CD8-positive, alpha-beta memory T cell (primary cell): ENCODE measurements at regions of chr6 and their contacts with region 1.

Region 1: DNA sequence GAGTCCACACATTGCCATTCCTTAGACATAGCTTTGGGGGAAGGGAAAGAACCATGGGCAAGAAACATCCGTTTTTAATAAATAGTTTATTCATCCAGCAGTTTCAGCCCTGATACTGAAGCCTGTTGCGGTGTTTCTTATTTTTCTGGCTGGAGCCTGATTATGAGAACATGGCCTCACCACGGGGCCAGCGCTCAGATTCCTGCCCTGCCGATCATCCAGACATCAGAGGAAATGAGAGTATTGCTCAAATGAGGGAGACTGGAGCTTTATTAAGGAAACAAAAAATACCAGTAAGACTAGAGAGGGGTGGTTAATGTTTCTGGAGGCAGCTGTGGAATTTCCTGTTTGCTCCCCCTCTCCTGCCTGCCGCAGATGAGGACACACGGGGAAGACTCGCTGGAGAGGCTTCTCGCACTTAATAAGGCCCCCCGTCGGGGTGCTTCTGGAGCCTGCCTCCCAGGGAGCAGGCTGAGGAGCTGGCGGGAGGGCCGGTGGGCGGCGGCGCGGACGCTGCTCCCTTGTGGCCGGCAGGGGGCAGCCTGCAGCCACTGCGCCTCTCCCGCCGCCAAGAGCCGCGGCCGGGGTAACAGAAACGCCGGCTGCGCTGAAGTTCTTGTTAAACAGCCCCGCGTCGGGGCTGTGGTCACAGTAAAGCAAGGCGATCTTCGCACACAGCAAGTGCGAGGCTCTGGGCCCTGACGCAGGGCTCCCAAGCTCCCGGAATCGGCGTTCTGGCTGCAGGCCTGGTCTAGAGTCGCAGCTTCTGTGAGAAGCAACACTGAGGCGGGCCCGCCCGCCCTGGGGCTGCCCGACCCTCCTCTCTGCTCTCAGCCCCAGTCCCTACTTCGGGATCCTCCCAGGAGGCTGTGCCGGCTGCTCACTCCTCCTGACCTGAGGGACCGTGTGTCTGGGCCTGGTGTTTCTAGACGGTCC is 17.5 kb downstream of the LEMD2 start:
- DNase-seq: peak; percentile 40 to 69 (median 54)
- H3K4me3 ChIP-seq: no peak overlapping the region
- H3K4me3 Mint-ChIP-seq: peak overlapping the region in 2 of 7 donors; percentile 15 to 44
- H3K27ac ChIP-seq: no peak overlapping the region
- H3K27ac Mint-ChIP-seq: peak overlapping the region in 2 of 8 donors; percentile 36 to 86
- H3K4me1 ChIP-seq: peaks cover 6% of the 10 kb centered on the region
- H3K4me1 Mint-ChIP-seq: peaks cover 13 to 23% (median 16%) of the 10 kb centered on the region in 3 donors
- H3K27me3 ChIP-seq: no peaks in the 10 kb centered on the region
- H3K27me3 Mint-ChIP-seq: peaks cover 4 to 15% of the 10 kb centered on the region in 2 donors

Region 2: GRCh38 chr6:33700391-33701050 is 70.9 kb before region 1 on chr6:
- CTCF ChIA-PET with region 1: no interaction called
- POLR2A ChIA-PET with region 1: no interaction called
- DNase-seq: peak; percentile 60 to 77 (median 61)
- H3K4me3 ChIP-seq: no peak overlapping the region
- H3K4me3 Mint-ChIP-seq: no peak overlapping the region
- H3K27ac ChIP-seq: no peak overlapping the region
- H3K27ac Mint-ChIP-seq: peak overlapping the region; percentile 8 to 94 (median 74)
- H3K4me1 ChIP-seq: peaks cover 33% of the 10 kb centered on the region
- H3K4me1 Mint-ChIP-seq: peaks cover 25 to 30% (median 29%) of the 10 kb centered on the region in 3 donors
- H3K27me3 ChIP-seq: no peaks in the 10 kb centered on the region
- H3K27me3 Mint-ChIP-seq: no peaks in the 10 kb centered on the region

Region 3: DNA sequence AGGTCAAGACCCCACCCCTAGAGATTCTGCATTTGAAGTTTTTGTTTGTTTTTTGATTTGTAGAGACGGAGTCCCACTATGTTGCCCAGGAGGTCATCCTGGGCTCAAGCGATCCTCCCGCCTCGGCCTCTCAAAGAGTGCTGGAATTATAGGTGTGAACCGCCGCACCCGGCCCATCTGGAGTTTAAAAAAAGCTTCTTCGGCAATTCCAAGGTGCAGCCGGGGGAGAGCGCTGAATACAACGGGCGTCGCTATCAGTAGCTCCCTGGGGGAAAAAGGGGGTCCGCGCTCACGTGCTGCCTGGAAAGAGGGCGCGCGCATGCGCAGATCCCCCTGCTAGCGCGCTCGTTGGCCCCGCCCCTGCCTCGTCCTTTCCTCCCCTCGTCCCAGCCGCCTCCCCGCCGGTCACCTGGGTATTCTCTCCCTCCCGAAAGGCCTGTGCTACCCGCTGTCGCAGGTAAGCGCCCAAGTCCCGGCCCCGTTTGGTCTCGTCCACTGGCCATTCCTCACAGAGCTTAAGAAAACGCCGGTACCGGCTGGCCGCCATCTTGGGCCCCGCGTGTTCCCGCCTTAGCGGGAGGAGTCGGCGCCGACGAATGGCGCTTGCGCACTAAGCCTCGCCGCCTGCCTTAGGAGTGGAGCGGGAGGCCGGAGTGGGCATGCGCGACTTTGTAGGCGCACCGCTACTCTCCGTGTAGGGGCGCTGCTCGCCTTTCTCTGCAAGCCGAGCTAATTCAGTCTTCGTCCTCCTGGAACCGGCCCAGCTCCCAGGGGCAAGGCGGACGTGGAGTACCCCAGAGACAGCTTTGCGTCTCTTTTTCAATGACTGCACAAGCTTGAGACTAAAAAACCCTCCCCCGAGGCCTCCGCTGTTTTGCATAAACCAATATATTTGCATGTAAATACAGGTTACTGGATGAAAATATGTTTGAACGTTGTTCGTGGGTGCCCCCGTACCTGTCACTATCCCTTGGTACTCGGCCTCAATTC is 60.0 kb before region 1 on chr6 and contains the start of gene UQCC2:
- CTCF ChIA-PET with region 1: interaction called, 15 read pairs
- POLR2A ChIA-PET with region 1: no interaction called
- DNase-seq: peak; percentile 96 to 99 (median 98)
- H3K4me3 ChIP-seq: peak within 1 kb of the TSS; percentile 98
- H3K4me3 Mint-ChIP-seq: peak within 1 kb of the TSS; percentile 98 to 100 (median 99)
- H3K27ac ChIP-seq: peak within 1 kb of the TSS; percentile 91
- H3K27ac Mint-ChIP-seq: peak within 1 kb of the TSS; percentile 96 to 99 (median 98)
- H3K4me1 ChIP-seq: peaks cover 18% of the 10 kb centered on the region
- H3K4me1 Mint-ChIP-seq: peaks cover 26 to 39% (median 39%) of the 10 kb centered on the region in 3 donors
- H3K27me3 ChIP-seq: no peaks in the 10 kb centered on the region
- H3K27me3 Mint-ChIP-seq: peaks cover 0 to 2% of the 10 kb centered on the region in 2 donors
- total RNA-seq, gene UQCC2: 150 to 157 TPM

Region 4: GRCh38 chr6:33744001-33744848 is 27.2 kb before region 1 on chr6:
- CTCF ChIA-PET with region 1: interaction called, 21 read pairs
- POLR2A ChIA-PET with region 1: no interaction called
- DNase-seq: peak; percentile 55 to 78 (median 60)
- H3K4me3 ChIP-seq: no peak overlapping the region
- H3K4me3 Mint-ChIP-seq: no peak overlapping the region
- H3K27ac ChIP-seq: no peak overlapping the region
- H3K27ac Mint-ChIP-seq: no peak overlapping the region
- H3K4me1 ChIP-seq: no peaks in the 10 kb centered on the region
- H3K4me1 Mint-ChIP-seq: peaks cover 4 to 5% (median 5%) of the 10 kb centered on the region in 3 donors
- H3K27me3 ChIP-seq: peaks cover 4% of the 10 kb centered on the region
- H3K27me3 Mint-ChIP-seq: peaks cover 12 to 20% of the 10 kb centered on the region in 2 donors

Region 5: GRCh38 chr6:33788694-33789549 is 17.5 kb after region 1 on chr6 and contains the start of gene LEMD2:
- CTCF ChIA-PET with region 1: interaction called, 20 read pairs
- POLR2A ChIA-PET with region 1: interaction called, 4 read pairs
- DNase-seq: peak; percentile 83 to 93 (median 87)
- H3K4me3 ChIP-seq: peak within 1 kb of the TSS; percentile 57
- H3K4me3 Mint-ChIP-seq: peak within 1 kb of the TSS; percentile 90 to 99 (median 96)
- H3K27ac ChIP-seq: peak within 1 kb of the TSS; percentile 89
- H3K27ac Mint-ChIP-seq: peak within 1 kb of the TSS; percentile 94 to 99 (median 98)
- H3K4me1 ChIP-seq: peaks cover 32% of the 10 kb centered on the region
- H3K4me1 Mint-ChIP-seq: peaks cover 48 to 56% (median 53%) of the 10 kb centered on the region in 3 donors
- H3K27me3 ChIP-seq: no peaks in the 10 kb centered on the region
- H3K27me3 Mint-ChIP-seq: no peaks in the 10 kb centered on the region
- total RNA-seq, gene LEMD2: 51.8 to 55.5 TPM

Region 6: DNA sequence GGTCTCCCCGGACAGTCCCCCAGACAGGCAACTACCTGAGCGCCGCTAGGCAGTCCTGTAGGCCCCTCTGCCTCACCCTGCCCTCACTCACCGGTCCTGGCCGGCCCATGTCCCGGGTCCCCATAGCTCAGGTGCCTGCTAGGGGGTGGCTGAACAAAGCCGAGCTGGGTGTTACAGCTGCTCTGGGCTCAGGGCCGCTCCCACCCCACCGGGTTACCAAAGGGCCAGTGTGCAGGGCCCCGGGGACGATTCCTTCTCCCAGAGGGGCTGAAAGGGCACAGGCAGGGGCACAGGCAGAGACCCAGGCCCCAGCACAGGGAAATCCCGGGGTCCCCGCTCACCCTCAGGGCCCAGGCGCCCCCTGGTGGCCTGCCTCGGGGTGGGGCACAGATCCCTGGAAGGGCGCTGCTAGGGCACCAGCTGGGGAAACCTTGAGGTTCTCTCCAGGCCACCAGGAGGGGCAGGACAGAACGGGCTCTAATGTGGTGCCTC is 256.1 kb after region 1 on chr6:
- CTCF ChIA-PET with region 1: interaction called, 106 read pairs
- POLR2A ChIA-PET with region 1: no interaction called
- DNase-seq: peak; percentile 50 to 75 (median 61)
- H3K4me3 ChIP-seq: no peak overlapping the region
- H3K4me3 Mint-ChIP-seq: no peak overlapping the region
- H3K27ac ChIP-seq: no peak overlapping the region
- H3K27ac Mint-ChIP-seq: no peak overlapping the region
- H3K4me1 ChIP-seq: no peaks in the 10 kb centered on the region
- H3K4me1 Mint-ChIP-seq: no peaks in the 10 kb centered on the region
- H3K27me3 ChIP-seq: no peaks in the 10 kb centered on the region
- H3K27me3 Mint-ChIP-seq: peaks cover 1 to 6% of the 10 kb centered on the region in 2 donors

Region 7: DNA sequence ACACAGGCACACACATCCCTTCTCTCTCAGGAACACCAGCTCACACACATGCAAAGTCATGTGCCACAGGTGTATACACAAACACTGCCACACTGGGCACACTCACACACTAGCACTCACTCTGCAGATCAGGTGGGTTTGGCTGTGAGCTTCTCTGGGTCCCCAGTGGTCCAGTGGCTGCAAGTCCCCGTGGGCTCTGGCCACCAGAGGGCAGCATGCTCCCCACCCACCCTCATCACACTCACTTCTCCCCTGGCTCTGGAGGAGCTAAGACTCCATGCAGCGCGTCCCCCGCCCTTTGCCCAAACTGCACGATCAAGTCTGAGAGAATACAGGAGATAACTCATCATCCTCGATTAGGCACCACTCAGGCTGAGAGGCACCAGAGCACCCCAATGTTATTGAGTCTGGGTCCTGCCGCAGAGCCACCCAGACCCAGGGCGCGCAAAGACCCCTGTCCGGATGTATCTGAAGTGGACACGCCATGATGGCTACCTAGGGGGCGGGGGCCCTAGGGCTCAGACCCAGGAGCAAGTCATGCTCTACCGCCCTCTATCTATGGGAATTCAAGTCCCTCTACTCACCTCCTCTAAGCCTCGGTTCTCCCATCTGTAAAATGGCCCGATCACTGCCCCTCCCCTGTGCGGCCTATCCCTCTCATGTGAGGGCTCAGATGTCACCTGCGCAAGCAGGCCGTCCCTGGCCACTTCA is 284.0 kb after region 1 on chr6:
- CTCF ChIA-PET with region 1: interaction called, 10 read pairs
- POLR2A ChIA-PET with region 1: no interaction called
- DNase-seq: peak; percentile 20 to 68 (median 37)
- H3K4me3 ChIP-seq: no peak overlapping the region
- H3K4me3 Mint-ChIP-seq: no peak overlapping the region
- H3K27ac ChIP-seq: no peak overlapping the region
- H3K27ac Mint-ChIP-seq: peak overlapping the region in 1 of 8 donors; percentile 56
- H3K4me1 ChIP-seq: no peaks in the 10 kb centered on the region
- H3K4me1 Mint-ChIP-seq: peaks cover 0 to 10% (median 4%) of the 10 kb centered on the region in 3 donors
- H3K27me3 ChIP-seq: no peaks in the 10 kb centered on the region
- H3K27me3 Mint-ChIP-seq: peaks cover 4 to 18% of the 10 kb centered on the region in 2 donors

Region 8: GRCh38 chr6:34154668-34155447 is 383.4 kb after region 1 on chr6:
- CTCF ChIA-PET with region 1: interaction called, 22 read pairs
- POLR2A ChIA-PET with region 1: interaction called, 4 read pairs
- DNase-seq: peak; percentile 37 to 70 (median 49)
- H3K4me3 ChIP-seq: peak overlapping the region; percentile 39
- H3K4me3 Mint-ChIP-seq: peak overlapping the region in 4 of 7 donors; percentile 9 to 59 (median 52)
- H3K27ac ChIP-seq: no peak overlapping the region
- H3K27ac Mint-ChIP-seq: no peak overlapping the region
- H3K4me1 ChIP-seq: peaks cover 7% of the 10 kb centered on the region
- H3K4me1 Mint-ChIP-seq: peaks cover 2 to 7% (median 6%) of the 10 kb centered on the region in 3 donors
- H3K27me3 ChIP-seq: peaks cover 29% of the 10 kb centered on the region
- H3K27me3 Mint-ChIP-seq: peaks cover 36 to 44% of the 10 kb centered on the region in 2 donors